ENCODE measurements at regions of chr5 and their contacts with region 1.

Region 1: GRCh38 chr5:32531885-32532520 is 53.4 kb upstream of the SUB1 start:
- DNase-seq: peak; percentile 58 to 63
- H3K4me3 ChIP-seq: no peak overlapping the region
- H3K4me3 Mint-ChIP-seq: peak overlapping the region; percentile 75
- H3K27ac Mint-ChIP-seq: peak overlapping the region; percentile 85
- H3K4me1 ChIP-seq: peaks cover 15% of the 10 kb centered on the region
- H3K4me1 Mint-ChIP-seq: peaks cover 15% of the 10 kb centered on the region
- H3K27me3 ChIP-seq: no peaks in the 10 kb centered on the region
- H3K27me3 Mint-ChIP-seq: no peaks in the 10 kb centered on the region
- CTCF ChIP-seq: no peak

Region 2: GRCh38 chr5:31531888-31532710 is 999.9 kb before region 1 on chr5 and contains the starts of genes C5orf22 and DROSHA:
- CTCF ChIA-PET with region 1: no interaction called
- POLR2A ChIA-PET with region 1: interaction called, 12 read pairs
- intact Hi-C with region 1: no loop called
- DNase-seq: peak; percentile 95 to 96
- H3K4me3 ChIP-seq: peak within 1 kb of the TSS; percentile 79
- H3K4me3 Mint-ChIP-seq: peak within 1 kb of the TSS; percentile 94
- H3K27ac Mint-ChIP-seq: peak within 1 kb of the TSS; percentile 98
- H3K4me1 ChIP-seq: 0 out of 2 replicates have a peak, but pooled peaks cover 16% of the 10 kb centered on the region
- H3K4me1 Mint-ChIP-seq: peaks cover 17% of the 10 kb centered on the region
- H3K27me3 ChIP-seq: no peaks in the 10 kb centered on the region
- H3K27me3 Mint-ChIP-seq: no peaks in the 10 kb centered on the region
- CTCF ChIP-seq: peak in 1 of 2 experiments; percentile 25
- total RNA-seq, gene C5orf22: 27.9 and 31.9 TPM in 2 replicates
- total RNA-seq, gene DROSHA: 88.4 and 88.9 TPM in 2 replicates

Region 3: GRCh38 chr5:32290922-32291321 is 241.1 kb before region 1 on chr5:
- CTCF ChIA-PET with region 1: no interaction called
- POLR2A ChIA-PET with region 1: no interaction called
- intact Hi-C with region 1: no loop called
- DNase-seq: no peak
- H3K4me3 ChIP-seq: no peak overlapping the region
- H3K4me3 Mint-ChIP-seq: no peak overlapping the region
- H3K27ac Mint-ChIP-seq: peak overlapping the region; percentile 53
- H3K4me1 ChIP-seq: peaks cover 6% of the 10 kb centered on the region; the same call in 1 of the 2 replicates
- H3K4me1 Mint-ChIP-seq: peaks cover 19% of the 10 kb centered on the region
- H3K27me3 ChIP-seq: no peaks in the 10 kb centered on the region
- H3K27me3 Mint-ChIP-seq: no peaks in the 10 kb centered on the region
- CTCF ChIP-seq: no peak

Region 4: GRCh38 chr5:32312647-32313523 is 219.1 kb before region 1 on chr5 and contains the start of gene MTMR12:
- CTCF ChIA-PET with region 1: no interaction called
- POLR2A ChIA-PET with region 1: no interaction called
- intact Hi-C with region 1: no loop called
- DNase-seq: peak; percentile 99 to 100
- H3K4me3 ChIP-seq: peak within 1 kb of the TSS; percentile 89
- H3K4me3 Mint-ChIP-seq: peak within 1 kb of the TSS; percentile 78
- H3K27ac Mint-ChIP-seq: peak within 1 kb of the TSS; percentile 66
- H3K4me1 ChIP-seq: peaks cover 10% of the 10 kb centered on the region
- H3K4me1 Mint-ChIP-seq: peaks cover 21% of the 10 kb centered on the region
- H3K27me3 ChIP-seq: no peaks in the 10 kb centered on the region
- H3K27me3 Mint-ChIP-seq: no peaks in the 10 kb centered on the region
- CTCF ChIP-seq: no peak
- total RNA-seq, gene MTMR12: 35.1 and 35.7 TPM in 2 replicates

Region 5: DNA sequence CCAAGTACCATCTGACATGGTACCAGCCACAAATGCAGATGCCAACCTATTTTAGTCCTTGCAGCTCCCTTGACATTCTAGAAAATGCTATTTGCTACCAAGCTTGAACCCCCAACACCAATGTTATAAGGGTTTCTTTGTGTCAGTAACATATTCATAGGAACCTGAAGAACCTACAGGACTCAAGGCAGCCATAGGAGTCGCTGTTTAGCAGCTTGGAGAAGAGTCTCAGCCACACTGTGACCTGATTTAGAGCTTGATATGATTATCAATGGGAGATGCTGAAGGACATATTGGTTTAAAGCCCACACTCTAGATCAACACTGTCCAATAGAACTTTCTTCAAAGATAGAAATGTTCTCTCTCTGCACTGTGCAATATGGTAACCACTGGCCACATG is 81.1 kb before region 1 on chr5:
- CTCF ChIA-PET with region 1: no interaction called
- POLR2A ChIA-PET with region 1: no interaction called
- intact Hi-C with region 1: no loop called
- DNase-seq: no peak
- H3K4me3 ChIP-seq: no peak overlapping the region
- H3K4me3 Mint-ChIP-seq: no peak overlapping the region
- H3K27ac Mint-ChIP-seq: no peak overlapping the region
- H3K4me1 ChIP-seq: no peaks in the 10 kb centered on the region
- H3K4me1 Mint-ChIP-seq: peaks cover under 1% of the 10 kb centered on the region
- H3K27me3 ChIP-seq: no peaks in the 10 kb centered on the region
- H3K27me3 Mint-ChIP-seq: no peaks in the 10 kb centered on the region
- CTCF ChIP-seq: no peak

Region 6: GRCh38 chr5:32489791-32490582 is 42.0 kb before region 1 on chr5:
- CTCF ChIA-PET with region 1: interaction called, 3 read pairs
- POLR2A ChIA-PET with region 1: interaction called, 3 read pairs
- intact Hi-C with region 1: loop called (anchors 5 kb)
- DNase-seq: peak; percentile 72 to 78
- H3K4me3 ChIP-seq: no peak overlapping the region
- H3K4me3 Mint-ChIP-seq: no peak overlapping the region
- H3K27ac Mint-ChIP-seq: peak overlapping the region; percentile 76
- H3K4me1 ChIP-seq: peaks cover 11% of the 10 kb centered on the region
- H3K4me1 Mint-ChIP-seq: peaks cover 19% of the 10 kb centered on the region
- H3K27me3 ChIP-seq: no peaks in the 10 kb centered on the region
- H3K27me3 Mint-ChIP-seq: no peaks in the 10 kb centered on the region
- CTCF ChIP-seq: peak; percentile 75 to 87

Measured in Caco-2 (cell line).